Colonic mucosa (tissue), 4 donors: ENCODE measurements at regions of chr20 and their contacts with region 1.

Region 1: GRCh38 chr20:34876162-34877001 is at the start of gene ACSS2:
- DNase-seq: peak; percentile 100
- H3K4me3 ChIP-seq: peak within 1 kb of the TSS; percentile 84
- H3K27ac ChIP-seq: peak within 1 kb of the TSS; percentile 85
- H3K4me1 ChIP-seq: peaks cover 11% of the 10 kb centered on the region
- H3K27me3 ChIP-seq: no peaks in the 10 kb centered on the region
- CTCF ChIP-seq: no peak
- total RNA-seq, gene ACSS2: 258 to 394 TPM

Region 2: DNA sequence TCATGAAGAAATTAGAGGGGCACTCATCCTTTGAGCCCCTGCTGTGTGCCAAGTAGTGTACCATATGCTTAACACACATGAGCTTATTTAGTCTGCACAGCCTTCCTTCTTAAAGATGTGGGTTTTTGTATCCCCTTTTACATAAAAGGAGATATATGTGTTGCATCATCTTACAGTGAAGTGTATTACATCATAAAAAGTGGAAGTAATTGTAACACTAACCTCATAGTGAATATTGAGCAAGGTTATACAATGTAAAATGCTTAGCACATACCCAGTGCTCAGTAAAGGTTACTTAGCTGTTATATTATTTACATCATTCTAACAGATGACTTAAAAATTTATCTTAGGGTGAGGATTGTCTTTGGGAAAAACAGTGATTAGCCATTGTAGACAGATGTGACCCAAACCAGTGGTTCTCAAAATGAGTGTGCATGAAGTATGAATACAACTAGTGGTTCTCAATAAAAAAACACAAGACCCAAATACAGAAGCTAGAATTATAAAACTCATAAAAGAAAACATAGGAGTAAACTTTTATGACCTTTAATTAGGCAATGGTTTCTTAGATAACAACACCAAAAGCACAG is 195.7 kb before region 1 on chr20:
- intact Hi-C with region 1: no loop called
- DNase-seq: no peak
- H3K4me3 ChIP-seq: no peak overlapping the region
- H3K27ac ChIP-seq: no peak overlapping the region
- H3K4me1 ChIP-seq: peaks cover 3% of the 10 kb centered on the region
- H3K27me3 ChIP-seq: no peaks in the 10 kb centered on the region
- CTCF ChIP-seq: no peak

Region 3: DNA sequence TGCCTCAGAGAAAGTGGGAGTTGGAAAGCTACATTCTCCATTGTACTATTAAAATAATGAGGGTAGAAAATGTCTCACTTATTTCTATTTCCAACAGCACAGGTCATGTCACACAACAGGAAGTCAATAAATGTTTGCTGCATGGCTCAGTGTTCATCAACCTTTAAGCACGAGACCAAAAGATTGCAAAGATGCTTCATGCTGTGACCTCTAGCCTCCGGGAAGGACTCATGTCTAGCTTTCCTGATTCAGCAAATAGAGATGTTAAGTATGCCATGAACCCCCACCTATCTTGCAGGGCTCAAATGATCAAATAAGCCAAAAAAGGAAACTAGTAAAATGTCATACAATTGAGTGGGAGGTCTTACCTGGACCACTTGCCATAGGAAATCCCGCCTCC is 108.3 kb before region 1 on chr20:
- intact Hi-C with region 1: no loop called
- DNase-seq: no peak
- H3K4me3 ChIP-seq: no peak overlapping the region
- H3K27ac ChIP-seq: no peak overlapping the region
- H3K4me1 ChIP-seq: no peaks in the 10 kb centered on the region
- H3K27me3 ChIP-seq: no peaks in the 10 kb centered on the region
- CTCF ChIP-seq: no peak

Region 4: GRCh38 chr20:34955232-34956040 is 79.1 kb after region 1 on chr20 and contains the starts of genes GSS and MYH7B:
- intact Hi-C with region 1: loop called (anchors 2 kb)
- DNase-seq: peak; percentile 98
- H3K4me3 ChIP-seq: peak within 1 kb of the TSS; percentile 50
- H3K27ac ChIP-seq: peak within 1 kb of the TSS; percentile 89
- H3K4me1 ChIP-seq: no peaks in the 10 kb centered on the region
- H3K27me3 ChIP-seq: no peaks in the 10 kb centered on the region
- CTCF ChIP-seq: no peak
- total RNA-seq, gene GSS: 83.4 to 109 TPM
- total RNA-seq, gene MYH7B: 0.69 to 1.5 TPM

Region 5: GRCh38 chr20:35092524-35093266 is 216.3 kb after region 1 on chr20 and contains the start of gene TRPC4AP:
- intact Hi-C with region 1: loop called (anchors 10 kb)
- DNase-seq: peak; percentile 87
- H3K4me3 ChIP-seq: peak within 1 kb of the TSS; percentile 72
- H3K27ac ChIP-seq: peak within 1 kb of the TSS; percentile 87
- H3K4me1 ChIP-seq: peaks cover 10% of the 10 kb centered on the region
- H3K27me3 ChIP-seq: no peaks in the 10 kb centered on the region
- CTCF ChIP-seq: peak; percentile 98
- total RNA-seq, gene TRPC4AP: 52.8 to 63.2 TPM